ENCODE measurements at regions of chr5 and their contacts with region 1.

Region 1: GRCh38 chr5:109987970-109988369 is 298.2 kb downstream of the MAN2A1 start:
- DNase-seq: no peak
- H3K4me3 ChIP-seq: peak overlapping the region in 1 of 2 donors; percentile 7
- H3K27ac ChIP-seq: peak overlapping the region; percentile 90 to 97
- H3K4me1 ChIP-seq: peaks cover 0 to 28% of the 10 kb centered on the region in 2 donors
- H3K27me3 ChIP-seq: no peaks in the 10 kb centered on the region
- CTCF ChIP-seq: no peak

Region 2: GRCh38 chr5:110038297-110038997 is 50.5 kb after region 1 on chr5:
- intact Hi-C with region 1: loop called (anchors 5 kb)
- DNase-seq: peak; percentile 16 to 73
- H3K4me3 ChIP-seq: no peak overlapping the region
- H3K27ac ChIP-seq: peak overlapping the region; percentile 45 to 62
- H3K4me1 ChIP-seq: peaks cover 0 to 5% of the 10 kb centered on the region in 2 donors
- H3K27me3 ChIP-seq: no peaks in the 10 kb centered on the region
- CTCF ChIP-seq: no peak

Region 3: DNA sequence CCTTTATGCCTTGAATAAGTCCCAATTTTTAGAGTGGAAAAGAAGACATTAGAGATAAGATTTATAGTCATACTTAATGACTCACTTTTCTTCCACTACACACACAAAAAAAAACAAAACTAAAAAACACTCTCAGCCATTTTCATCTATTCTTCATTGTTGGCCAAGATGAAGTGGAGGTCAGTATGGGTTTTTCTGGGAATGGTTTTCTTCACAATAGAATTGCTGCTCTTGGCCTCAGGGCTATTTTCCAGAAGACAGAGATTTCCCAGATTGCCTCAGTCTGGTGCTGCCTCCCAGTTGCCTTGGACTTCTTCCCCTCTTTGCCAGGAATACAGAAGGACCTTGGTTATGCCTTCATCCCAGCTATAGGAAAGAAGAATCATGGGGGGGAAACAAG is 274.8 kb after region 1 on chr5:
- intact Hi-C with region 1: loop called (anchors 10 kb)
- DNase-seq: no peak
- H3K4me3 ChIP-seq: no peak overlapping the region
- H3K27ac ChIP-seq: peak overlapping the region; percentile 35 to 73
- H3K4me1 ChIP-seq: peaks cover 0 to 18% of the 10 kb centered on the region in 2 donors
- H3K27me3 ChIP-seq: no peaks in the 10 kb centered on the region
- CTCF ChIP-seq: no peak

Measured in ascending aorta (tissue), 2 donors.